HepG2 (cell line): ENCODE measurements at regions of chr6 and their contacts with region 1.

Region 1: DNA sequence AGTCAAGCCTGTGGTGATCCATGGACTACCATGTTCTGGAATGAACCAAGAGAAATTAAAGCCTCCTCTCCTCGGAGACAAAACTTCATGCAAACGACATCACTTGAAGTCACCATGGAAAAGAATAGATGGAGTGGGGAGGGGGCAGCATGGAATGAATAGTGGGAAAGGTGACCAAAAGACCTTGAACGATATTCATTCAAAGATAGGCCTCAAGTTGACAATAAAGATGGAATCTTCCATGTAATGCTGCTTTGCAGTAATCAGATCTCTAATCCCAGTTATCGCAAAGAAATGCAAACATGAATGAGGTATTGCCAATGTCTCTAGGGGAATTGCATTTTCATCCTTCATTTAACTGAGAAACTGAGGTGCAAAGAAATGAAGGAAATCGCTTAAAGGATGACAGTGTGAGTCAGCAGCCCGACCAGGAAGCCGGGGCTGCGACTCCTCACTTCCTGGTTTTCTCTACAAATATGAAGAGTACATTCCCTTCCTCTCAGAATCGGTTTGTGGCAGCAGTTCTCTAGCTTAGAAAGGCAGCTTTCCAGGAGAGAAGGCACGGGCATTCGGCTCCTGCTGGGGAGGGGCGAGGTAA is 65.6 kb upstream of the RREB1 start:
- DNase-seq: peak; percentile 46
- ATAC-seq: peak; percentile 72
- H3K4me3 ChIP-seq: peak overlapping the region; percentile 17 to 58 (median 39)
- H3K27ac ChIP-seq: peak overlapping the region; percentile 81
- H3K4me1 ChIP-seq: peaks cover 25% of the 10 kb centered on the region
- H3K27me3 ChIP-seq: peaks cover 0 to 2% of the 10 kb centered on the region in 2 experiments; a peak in 1 of 5 replicates
- CTCF ChIP-seq: peak; percentile 16; the same call in 1 of the 2 replicates
- EP300 ChIP-seq: no peak; a peak in 1 of 4 replicates
- POLR2A ChIP-seq: no peak
- RAD21 ChIP-seq: no peak

Region 2: DNA sequence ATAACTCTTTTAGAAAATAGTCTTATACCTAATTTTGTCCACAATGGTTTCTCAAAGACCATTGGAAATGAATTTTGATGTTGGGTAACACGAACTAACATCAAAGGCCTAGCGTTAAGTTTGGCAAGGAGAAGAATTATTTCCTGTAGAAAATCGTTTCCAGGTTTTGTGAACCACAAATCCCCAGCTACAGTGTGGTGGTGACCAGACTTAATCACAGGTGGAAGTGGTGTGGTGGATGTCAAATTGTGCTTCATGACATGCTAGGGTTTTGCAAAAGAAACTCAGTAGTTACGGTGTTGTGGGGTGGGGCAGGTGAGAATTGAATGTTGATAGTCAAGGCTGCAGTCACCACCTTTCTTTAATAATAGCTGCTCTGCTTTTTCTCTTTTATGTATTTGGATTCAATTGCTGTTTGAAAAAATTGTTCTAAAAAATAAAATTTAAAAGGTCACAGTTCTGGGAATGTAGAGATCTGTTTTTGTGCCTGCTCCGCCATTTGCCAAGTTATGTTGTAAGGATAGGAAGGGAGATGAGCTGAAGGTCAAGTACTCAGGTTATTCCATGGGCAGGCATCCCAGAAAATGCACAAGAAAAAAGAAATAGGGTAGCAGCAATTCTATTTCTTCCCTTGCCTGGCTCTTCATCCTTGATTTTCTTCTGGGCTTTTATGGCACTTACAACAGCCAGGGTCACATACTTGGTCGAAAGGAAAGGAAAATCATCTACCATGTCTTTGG is 805.3 kb before region 1 on chr6:
- CTCF ChIA-PET with region 1: no interaction called
- POLR2A ChIA-PET with region 1: no interaction called
- in situ Hi-C with region 1: no loop called
- intact Hi-C with region 1: loop called (anchors 5 kb)
- DNase-seq: no peak
- ATAC-seq: no peak
- H3K4me3 ChIP-seq: no peak overlapping the region
- H3K27ac ChIP-seq: no peak overlapping the region
- H3K4me1 ChIP-seq: no peaks in the 10 kb centered on the region
- H3K27me3 ChIP-seq: 0 out of 5 replicates have a peak, but pooled peaks cover 0 to 3% of the 10 kb centered on the region in 2 experiments
- CTCF ChIP-seq: no peak
- EP300 ChIP-seq: no peak
- POLR2A ChIP-seq: no peak
- RAD21 ChIP-seq: no peak

Region 3: DNA sequence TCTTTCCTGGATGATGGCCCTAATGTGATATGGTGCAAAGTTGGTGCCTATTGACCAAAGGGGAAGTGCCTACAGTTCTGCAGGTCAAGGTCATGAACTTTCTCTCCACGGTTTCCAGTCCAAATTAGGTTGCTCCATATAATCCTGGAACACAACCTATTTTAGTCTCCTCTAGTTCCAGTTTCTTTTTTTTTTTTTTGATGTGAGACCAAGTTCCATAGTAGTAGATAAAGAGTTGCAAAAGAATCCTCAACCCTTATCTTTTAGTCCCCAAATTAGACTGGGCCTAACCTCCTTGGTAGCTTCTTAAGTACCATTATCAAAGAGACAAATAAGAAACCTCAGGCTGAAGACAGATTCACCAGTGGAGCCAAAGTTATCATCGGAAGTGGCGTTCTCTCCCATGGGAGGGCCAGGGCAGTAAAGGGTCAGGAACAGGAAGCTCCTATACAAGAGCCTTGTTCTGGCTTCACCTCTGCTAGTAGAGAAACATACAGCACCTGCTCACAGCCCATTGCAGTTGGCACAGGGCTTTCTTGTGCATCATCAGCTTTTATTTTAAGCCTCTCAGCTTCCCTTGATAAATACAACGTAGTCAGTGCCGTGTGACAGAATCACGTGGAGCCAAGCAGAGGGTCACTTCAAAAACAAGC is 66.6 kb before region 1 on chr6:
- CTCF ChIA-PET with region 1: no interaction called
- POLR2A ChIA-PET with region 1: no interaction called
- in situ Hi-C with region 1: no loop called
- intact Hi-C with region 1: no loop called
- DNase-seq: no peak
- ATAC-seq: no peak
- H3K4me3 ChIP-seq: no peak overlapping the region
- H3K27ac ChIP-seq: no peak overlapping the region
- H3K4me1 ChIP-seq: peaks cover 22% of the 10 kb centered on the region
- H3K27me3 ChIP-seq: peaks cover 0 to 14% of the 10 kb centered on the region in 2 experiments; a peak in 3 of 5 replicates
- CTCF ChIP-seq: no peak
- EP300 ChIP-seq: no peak
- POLR2A ChIP-seq: no peak
- RAD21 ChIP-seq: no peak

Region 4: GRCh38 chr6:7058250-7058923 is 16.2 kb after region 1 on chr6:
- CTCF ChIA-PET with region 1: no interaction called
- POLR2A ChIA-PET with region 1: interaction called, 17 read pairs
- in situ Hi-C with region 1: no loop called
- intact Hi-C with region 1: no loop called
- DNase-seq: peak; percentile 77
- ATAC-seq: peak; percentile 97
- H3K4me3 ChIP-seq: no peak overlapping the region
- H3K27ac ChIP-seq: no peak overlapping the region
- H3K4me1 ChIP-seq: peaks cover 15% of the 10 kb centered on the region
- H3K27me3 ChIP-seq: no peaks in the 10 kb centered on the region
- CTCF ChIP-seq: no peak
- EP300 ChIP-seq: peak in 1 of 2 experiments; percentile 22; a peak in 1 of 4 replicates
- POLR2A ChIP-seq: no peak
- RAD21 ChIP-seq: no peak